Caco-2 (cell line): ENCODE measurements at regions of chr11 and their contacts with region 1.

Region 1: GRCh38 chr11:100980156-100980555 is 149.5 kb downstream of the PGR start:
- DNase-seq: peak in 1 of 2 experiments; percentile 33
- H3K4me3 ChIP-seq: no peak overlapping the region
- H3K4me3 Mint-ChIP-seq: no peak overlapping the region
- H3K27ac Mint-ChIP-seq: no peak overlapping the region
- H3K4me1 ChIP-seq: no peaks in the 10 kb centered on the region
- H3K4me1 Mint-ChIP-seq: no peaks in the 10 kb centered on the region
- H3K27me3 ChIP-seq: no peaks in the 10 kb centered on the region
- H3K27me3 Mint-ChIP-seq: no peaks in the 10 kb centered on the region
- CTCF ChIP-seq: peak; percentile 49 to 70

Region 2: DNA sequence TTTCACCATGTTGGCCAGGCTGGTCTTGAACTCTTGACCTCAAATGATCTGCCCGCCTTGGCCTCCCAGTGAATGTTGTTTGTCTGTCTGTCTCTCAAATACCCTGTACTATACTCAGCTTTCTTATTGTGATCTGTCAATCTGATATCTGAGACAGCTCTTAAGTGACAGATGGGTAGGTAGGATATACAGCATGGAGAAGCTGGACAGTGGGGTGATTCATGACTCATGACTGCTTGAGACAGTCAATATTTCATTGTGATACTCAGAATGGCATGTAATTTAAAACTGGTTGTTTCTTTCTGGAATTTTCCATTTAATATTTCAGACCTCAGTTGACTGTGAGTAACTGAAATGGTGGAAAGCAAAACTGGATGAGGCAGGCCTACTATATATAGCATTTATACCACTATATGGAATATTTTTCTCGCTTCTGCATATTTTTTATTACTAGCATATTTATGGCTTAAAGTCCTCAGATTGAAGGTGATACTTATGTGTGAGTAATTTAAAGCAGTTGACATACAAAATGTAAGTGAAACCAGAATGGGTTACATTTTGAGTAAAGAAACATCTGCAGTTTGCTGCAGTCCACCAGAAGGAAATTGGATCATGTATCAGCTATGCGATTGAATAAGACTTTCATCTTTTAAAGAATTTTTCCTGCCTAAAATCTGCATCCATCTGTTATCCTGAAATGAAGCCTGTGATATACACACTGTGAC is 270.8 kb before region 1 on chr11:
- CTCF ChIA-PET with region 1: no interaction called
- POLR2A ChIA-PET with region 1: no interaction called
- intact Hi-C with region 1: no loop called
- DNase-seq: no peak
- H3K4me3 ChIP-seq: no peak overlapping the region
- H3K4me3 Mint-ChIP-seq: no peak overlapping the region
- H3K27ac Mint-ChIP-seq: no peak overlapping the region
- H3K4me1 ChIP-seq: no peaks in the 10 kb centered on the region
- H3K4me1 Mint-ChIP-seq: peaks cover 7% of the 10 kb centered on the region
- H3K27me3 ChIP-seq: no peaks in the 10 kb centered on the region
- H3K27me3 Mint-ChIP-seq: no peaks in the 10 kb centered on the region
- CTCF ChIP-seq: no peak

Region 3: DNA sequence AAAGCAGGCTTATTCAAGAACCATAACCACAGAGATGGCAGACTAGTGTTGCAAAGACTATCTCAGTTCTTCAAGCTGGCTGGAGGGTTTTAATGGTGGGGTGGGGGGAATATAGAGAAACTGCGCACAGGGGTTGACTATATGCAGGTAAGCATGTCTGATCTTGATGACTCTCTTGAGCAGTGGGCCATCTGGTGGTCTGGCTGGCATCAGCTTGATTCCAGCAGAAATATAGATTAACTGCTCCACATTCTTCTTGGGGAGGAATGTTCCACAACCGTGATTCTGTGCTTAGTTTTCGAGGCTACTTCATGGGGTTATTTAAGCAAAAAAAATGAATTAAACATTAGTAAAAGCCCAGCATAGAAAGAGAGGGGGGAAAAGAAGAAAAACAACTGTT is 308.2 kb after region 1 on chr11:
- CTCF ChIA-PET with region 1: no interaction called
- POLR2A ChIA-PET with region 1: no interaction called
- intact Hi-C with region 1: loop called (anchors 1 kb)
- DNase-seq: peak in 1 of 2 experiments; percentile 29
- H3K4me3 ChIP-seq: no peak overlapping the region
- H3K4me3 Mint-ChIP-seq: no peak overlapping the region
- H3K27ac Mint-ChIP-seq: no peak overlapping the region
- H3K4me1 ChIP-seq: no peaks in the 10 kb centered on the region
- H3K4me1 Mint-ChIP-seq: no peaks in the 10 kb centered on the region
- H3K27me3 ChIP-seq: no peaks in the 10 kb centered on the region
- H3K27me3 Mint-ChIP-seq: no peaks in the 10 kb centered on the region
- CTCF ChIP-seq: peak in 1 of 2 experiments; percentile 27

Region 4: GRCh38 chr11:101305496-101305895 is 325.3 kb after region 1 on chr11:
- CTCF ChIA-PET with region 1: no interaction called
- POLR2A ChIA-PET with region 1: interaction called, 11 read pairs
- intact Hi-C with region 1: no loop called
- DNase-seq: no peak
- H3K4me3 ChIP-seq: no peak overlapping the region
- H3K4me3 Mint-ChIP-seq: no peak overlapping the region
- H3K27ac Mint-ChIP-seq: no peak overlapping the region
- H3K4me1 ChIP-seq: no peaks in the 10 kb centered on the region
- H3K4me1 Mint-ChIP-seq: no peaks in the 10 kb centered on the region
- H3K27me3 ChIP-seq: no peaks in the 10 kb centered on the region
- H3K27me3 Mint-ChIP-seq: peaks cover 4% of the 10 kb centered on the region
- CTCF ChIP-seq: no peak

Region 5: GRCh38 chr11:101323997-101324396 is 343.8 kb after region 1 on chr11:
- CTCF ChIA-PET with region 1: interaction called, 7 read pairs
- POLR2A ChIA-PET with region 1: no interaction called
- intact Hi-C with region 1: loop called (anchors 1 kb)
- DNase-seq: peak in 1 of 2 experiments; percentile 46
- H3K4me3 ChIP-seq: no peak overlapping the region
- H3K4me3 Mint-ChIP-seq: no peak overlapping the region
- H3K27ac Mint-ChIP-seq: no peak overlapping the region
- H3K4me1 ChIP-seq: no peaks in the 10 kb centered on the region
- H3K4me1 Mint-ChIP-seq: no peaks in the 10 kb centered on the region
- H3K27me3 ChIP-seq: no peaks in the 10 kb centered on the region; the same call in 1 of the 2 replicates
- H3K27me3 Mint-ChIP-seq: peaks cover 8% of the 10 kb centered on the region
- CTCF ChIP-seq: peak; percentile 25 to 39

Region 6: DNA sequence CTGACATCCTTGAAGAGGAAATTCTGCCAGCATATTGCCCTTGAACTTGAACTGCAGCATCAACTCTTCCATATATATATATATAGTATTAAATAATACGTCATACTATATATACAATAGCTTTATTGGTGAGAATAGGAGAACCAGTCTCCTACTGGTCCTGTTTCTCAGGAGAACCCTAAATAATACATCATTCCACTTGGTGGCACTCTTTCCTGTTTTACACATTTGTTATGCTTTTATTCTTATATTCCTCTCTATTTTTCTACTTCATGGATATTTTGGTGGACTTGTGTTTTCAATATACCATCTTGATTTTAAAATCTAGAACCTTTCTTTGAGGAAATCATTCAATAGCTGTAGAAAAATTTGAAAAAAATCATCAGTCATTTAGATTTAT is 410.4 kb after region 1 on chr11:
- CTCF ChIA-PET with region 1: no interaction called
- POLR2A ChIA-PET with region 1: no interaction called
- intact Hi-C with region 1: loop called (anchors 1 kb)
- DNase-seq: no peak
- H3K4me3 ChIP-seq: no peak overlapping the region
- H3K4me3 Mint-ChIP-seq: no peak overlapping the region
- H3K27ac Mint-ChIP-seq: no peak overlapping the region
- H3K4me1 ChIP-seq: no peaks in the 10 kb centered on the region
- H3K4me1 Mint-ChIP-seq: no peaks in the 10 kb centered on the region
- H3K27me3 ChIP-seq: no peaks in the 10 kb centered on the region
- H3K27me3 Mint-ChIP-seq: no peaks in the 10 kb centered on the region
- CTCF ChIP-seq: peak; percentile 36 to 37

Region 7: GRCh38 chr11:101428918-101429317 is 448.8 kb after region 1 on chr11:
- CTCF ChIA-PET with region 1: no interaction called
- POLR2A ChIA-PET with region 1: no interaction called
- intact Hi-C with region 1: loop called (anchors 2 kb)
- DNase-seq: peak in 1 of 2 experiments; percentile 65
- H3K4me3 ChIP-seq: no peak overlapping the region
- H3K4me3 Mint-ChIP-seq: peak overlapping the region; percentile 10
- H3K27ac Mint-ChIP-seq: no peak overlapping the region
- H3K4me1 ChIP-seq: peaks cover 22% of the 10 kb centered on the region
- H3K4me1 Mint-ChIP-seq: peaks cover 23% of the 10 kb centered on the region
- H3K27me3 ChIP-seq: no peaks in the 10 kb centered on the region
- H3K27me3 Mint-ChIP-seq: no peaks in the 10 kb centered on the region
- CTCF ChIP-seq: peak; percentile 74 to 79

Region 8: DNA sequence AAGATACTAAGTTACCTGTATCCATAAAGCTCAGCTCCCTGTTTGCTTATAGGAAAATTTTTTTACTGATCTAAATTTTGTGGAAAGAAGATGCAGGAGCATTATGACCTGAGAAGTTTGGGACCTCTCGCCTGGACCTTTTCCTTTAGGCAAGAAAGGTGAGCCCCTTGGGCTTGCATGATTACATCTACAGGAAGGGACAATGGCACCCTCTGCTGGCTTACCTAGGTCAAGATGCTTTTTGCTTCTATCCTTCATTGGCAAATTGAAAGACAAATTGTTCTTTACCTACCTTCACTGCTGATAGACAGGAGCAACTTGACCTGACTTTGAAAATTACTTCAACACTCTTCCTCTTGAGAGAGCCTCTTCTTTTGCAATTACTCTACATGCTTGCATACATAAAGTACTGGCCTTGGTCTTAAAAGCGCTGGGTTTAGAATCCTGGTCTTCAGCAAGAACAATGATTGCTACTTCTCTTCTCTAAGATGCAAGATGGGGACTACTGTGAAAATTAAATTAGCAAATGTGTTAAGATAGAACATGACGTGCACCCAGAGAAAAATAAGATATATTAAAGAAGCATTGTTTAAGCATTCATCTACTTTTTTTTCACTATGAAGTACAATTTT is 456.5 kb after region 1 on chr11:
- CTCF ChIA-PET with region 1: interaction called, 3 read pairs
- POLR2A ChIA-PET with region 1: no interaction called
- intact Hi-C with region 1: loop called (anchors 1 kb)
- DNase-seq: peak; percentile 79 to 80
- H3K4me3 ChIP-seq: no peak overlapping the region
- H3K4me3 Mint-ChIP-seq: no peak overlapping the region
- H3K27ac Mint-ChIP-seq: no peak overlapping the region
- H3K4me1 ChIP-seq: no peaks in the 10 kb centered on the region
- H3K4me1 Mint-ChIP-seq: no peaks in the 10 kb centered on the region
- H3K27me3 ChIP-seq: no peaks in the 10 kb centered on the region
- H3K27me3 Mint-ChIP-seq: no peaks in the 10 kb centered on the region
- CTCF ChIP-seq: peak; percentile 89 to 96